ENCODE measurements at regions of chr11 and their contacts with region 1.

Region 1: GRCh38 chr11:73965076-73965860 is 14.4 kb downstream of the DNAJB13 start:
- DNase-seq: no peak
- H3K4me3 Mint-ChIP-seq: no peak overlapping the region
- H3K27ac Mint-ChIP-seq: no peak overlapping the region
- H3K4me1 Mint-ChIP-seq: peaks cover 41% of the 10 kb centered on the region
- H3K27me3 Mint-ChIP-seq: no peaks in the 10 kb centered on the region

Region 2: DNA sequence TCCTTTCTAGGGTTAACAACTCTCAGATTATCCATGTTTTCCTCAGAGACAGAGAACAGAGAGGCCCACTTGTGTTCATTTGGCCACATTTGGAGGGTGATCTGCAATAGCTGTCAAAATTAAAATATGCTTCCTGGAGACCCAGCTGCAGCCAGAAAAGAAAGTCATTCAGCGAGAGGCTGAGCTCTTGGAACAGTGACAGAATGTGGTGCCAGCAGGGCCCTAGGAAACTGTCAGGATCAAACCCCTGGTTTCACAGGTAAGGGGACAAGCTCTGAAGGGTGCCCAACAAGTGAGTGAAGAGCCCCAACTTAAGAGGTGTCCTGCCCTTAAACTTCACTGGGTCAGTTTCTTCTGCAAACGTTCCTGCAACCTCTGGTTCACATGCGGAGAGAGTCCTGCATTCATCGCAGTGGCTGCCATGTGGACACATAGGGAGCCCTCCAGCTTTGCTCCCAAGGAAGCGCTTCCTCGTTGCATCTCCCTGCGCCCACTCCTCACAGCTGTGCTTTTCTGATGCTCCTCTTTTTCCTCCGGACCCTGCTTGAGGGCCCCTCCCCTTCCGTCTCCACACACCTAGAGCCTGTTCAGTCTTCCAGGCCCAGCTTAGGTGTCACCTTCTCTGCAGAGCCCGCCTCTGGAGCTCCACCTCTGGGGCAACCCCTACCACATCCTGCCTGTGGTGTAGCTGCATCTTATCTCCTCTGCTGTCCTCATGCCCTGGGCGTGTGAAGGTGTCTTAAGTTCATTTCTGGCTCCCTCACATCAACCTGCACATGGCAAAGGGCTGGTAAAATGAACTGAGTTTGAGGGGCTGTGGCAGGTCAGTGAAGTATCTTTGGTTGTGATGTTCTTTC is 39.7 kb after region 1 on chr11:
- CTCF ChIA-PET with region 1: interaction called, 3 read pairs
- POLR2A ChIA-PET with region 1: no interaction called
- intact Hi-C with region 1: loop called (anchors 5 kb)
- DNase-seq: peak; percentile 92
- H3K4me3 Mint-ChIP-seq: peak overlapping the region; percentile 63
- H3K27ac Mint-ChIP-seq: peak overlapping the region; percentile 91
- H3K4me1 Mint-ChIP-seq: peaks cover 65% of the 10 kb centered on the region
- H3K27me3 Mint-ChIP-seq: no peaks in the 10 kb centered on the region

Region 3: GRCh38 chr11:74030723-74031676 is 65.7 kb after region 1 on chr11:
- CTCF ChIA-PET with region 1: interaction called, 11 read pairs
- POLR2A ChIA-PET with region 1: interaction called, 3 read pairs
- intact Hi-C with region 1: no loop called
- DNase-seq: no peak
- H3K4me3 Mint-ChIP-seq: peak overlapping the region; percentile 57
- H3K27ac Mint-ChIP-seq: peak overlapping the region; percentile 77
- H3K4me1 Mint-ChIP-seq: peaks cover 41% of the 10 kb centered on the region
- H3K27me3 Mint-ChIP-seq: no peaks in the 10 kb centered on the region

Region 4: GRCh38 chr11:74090701-74091100 is 125.4 kb after region 1 on chr11:
- CTCF ChIA-PET with region 1: interaction called, 13 read pairs
- POLR2A ChIA-PET with region 1: no interaction called
- intact Hi-C with region 1: loop called (anchors 1 kb)
- DNase-seq: no peak
- H3K4me3 Mint-ChIP-seq: no peak overlapping the region
- H3K27ac Mint-ChIP-seq: no peak overlapping the region
- H3K4me1 Mint-ChIP-seq: peaks cover 5% of the 10 kb centered on the region
- H3K27me3 Mint-ChIP-seq: no peaks in the 10 kb centered on the region

Region 5: GRCh38 chr11:74255741-74256369 is 290.6 kb after region 1 on chr11:
- CTCF ChIA-PET with region 1: interaction called, 5 read pairs
- POLR2A ChIA-PET with region 1: no interaction called
- intact Hi-C with region 1: loop called (anchors 10 kb)
- DNase-seq: peak; percentile 66
- H3K4me3 Mint-ChIP-seq: no peak overlapping the region
- H3K27ac Mint-ChIP-seq: no peak overlapping the region
- H3K4me1 Mint-ChIP-seq: peaks cover 5% of the 10 kb centered on the region
- H3K27me3 Mint-ChIP-seq: no peaks in the 10 kb centered on the region

Measured in activated CD4-positive, alpha-beta memory T cell treated with anti-CD3 and anti-CD28 coated beads for 36 hours (primary cell).